PC-3 (cell line): ENCODE measurements at regions of chr17 and their contacts with region 1.

Region 1: GRCh38 chr17:44503147-44504029 is at the start of gene GPATCH8:
- DNase-seq: peak; percentile 97
- ATAC-seq: peak; percentile 92
- H3K4me3 ChIP-seq: peak within 1 kb of the TSS; percentile 94
- H3K27ac ChIP-seq: peak within 1 kb of the TSS; percentile 66
- H3K4me1 ChIP-seq: peaks cover 29% of the 10 kb centered on the region
- H3K27me3 ChIP-seq: no peaks in the 10 kb centered on the region
- CTCF ChIP-seq: no peak
- total RNA-seq, gene GPATCH8: 22.7 and 30.1 TPM in 2 replicates

Region 2: GRCh38 chr17:44199553-44200477 is 303.6 kb before region 1 on chr17 and contains the start of gene ATXN7L3:
- CTCF ChIA-PET with region 1: no interaction called
- POLR2A ChIA-PET with region 1: no interaction called
- intact Hi-C with region 1: loop called (anchors 10 kb)
- DNase-seq: peak; percentile 99
- ATAC-seq: peak; percentile 77
- H3K4me3 ChIP-seq: peak within 1 kb of the TSS; percentile 89
- H3K27ac ChIP-seq: peak within 1 kb of the TSS; percentile 79
- H3K4me1 ChIP-seq: peaks cover 36% of the 10 kb centered on the region
- H3K27me3 ChIP-seq: no peaks in the 10 kb centered on the region
- CTCF ChIP-seq: no peak
- total RNA-seq, gene ATXN7L3: 73.9 and 78.3 TPM in 2 replicates

Region 3: DNA sequence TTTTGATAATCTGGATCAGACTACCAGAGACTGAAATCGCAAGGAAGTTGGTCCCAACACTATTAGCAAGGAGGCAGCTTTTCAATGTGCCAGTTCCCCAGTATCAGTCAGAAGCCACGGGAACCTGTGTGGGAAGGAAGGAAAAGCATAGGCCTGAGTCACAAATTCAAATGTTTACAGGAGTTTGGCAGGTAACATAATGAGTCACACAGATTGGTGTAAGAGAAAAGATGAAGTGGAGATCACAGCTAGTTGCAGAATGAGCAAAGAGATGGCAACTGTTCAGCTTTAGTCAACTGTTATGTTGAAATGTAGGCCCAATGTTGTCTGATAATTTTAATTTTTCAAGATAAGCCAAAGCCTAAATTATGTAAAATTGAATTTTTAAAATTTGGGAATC is 85.8 kb before region 1 on chr17:
- CTCF ChIA-PET with region 1: no interaction called
- POLR2A ChIA-PET with region 1: no interaction called
- intact Hi-C with region 1: loop called (anchors 5 kb)
- DNase-seq: peak; percentile 98
- ATAC-seq: peak; percentile 100
- H3K4me3 ChIP-seq: no peak overlapping the region
- H3K27ac ChIP-seq: peak overlapping the region; percentile 75
- H3K4me1 ChIP-seq: peaks cover 16% of the 10 kb centered on the region
- H3K27me3 ChIP-seq: no peaks in the 10 kb centered on the region
- CTCF ChIP-seq: no peak

Region 4: GRCh38 chr17:44733753-44734152 is 230.4 kb after region 1 on chr17:
- CTCF ChIA-PET with region 1: no interaction called
- POLR2A ChIA-PET with region 1: no interaction called
- intact Hi-C with region 1: no loop called
- DNase-seq: peak; percentile 50
- ATAC-seq: peak; percentile 80
- H3K4me3 ChIP-seq: no peak overlapping the region
- H3K27ac ChIP-seq: no peak overlapping the region
- H3K4me1 ChIP-seq: no peaks in the 10 kb centered on the region
- H3K27me3 ChIP-seq: no peaks in the 10 kb centered on the region
- CTCF ChIP-seq: peak; percentile 67